ENCODE measurements at regions of chr6 and their contacts with region 1.

Region 1: DNA sequence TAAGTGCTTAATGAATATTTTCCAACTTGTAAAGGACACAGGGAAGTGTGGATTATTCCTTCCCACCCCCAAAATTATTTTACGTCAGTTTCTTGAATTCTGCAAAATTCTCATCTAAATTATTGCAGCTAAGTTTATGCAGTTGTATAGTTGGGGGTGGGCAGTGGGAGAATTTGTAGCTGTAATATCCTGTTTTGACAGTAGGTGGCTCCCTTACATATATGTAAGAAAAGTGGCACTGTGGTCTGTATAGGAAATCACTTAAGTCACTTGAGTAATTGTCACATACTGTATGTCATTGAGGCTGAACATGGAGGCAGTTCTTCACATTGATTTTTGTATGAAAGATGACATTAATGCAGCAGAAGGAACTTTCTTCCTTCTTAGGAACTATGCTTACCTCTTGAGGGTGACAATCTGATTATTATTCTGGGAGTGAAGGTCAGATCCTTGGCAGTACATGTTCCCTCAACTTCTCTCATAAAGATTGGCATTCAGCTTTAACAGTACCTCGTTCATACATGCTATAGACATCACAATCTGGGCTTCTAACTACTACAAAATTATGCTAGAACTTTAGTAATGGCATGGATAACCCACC is 14.7 kb upstream of the CFAP206 start:
- DNase-seq: peak; percentile 18 to 42
- H3K4me3 ChIP-seq: no peak overlapping the region
- H3K27ac ChIP-seq: no peak overlapping the region
- H3K4me1 ChIP-seq: no peaks in the 10 kb centered on the region
- H3K27me3 ChIP-seq: no peaks in the 10 kb centered on the region
- CTCF ChIP-seq: peak; percentile 76

Region 2: DNA sequence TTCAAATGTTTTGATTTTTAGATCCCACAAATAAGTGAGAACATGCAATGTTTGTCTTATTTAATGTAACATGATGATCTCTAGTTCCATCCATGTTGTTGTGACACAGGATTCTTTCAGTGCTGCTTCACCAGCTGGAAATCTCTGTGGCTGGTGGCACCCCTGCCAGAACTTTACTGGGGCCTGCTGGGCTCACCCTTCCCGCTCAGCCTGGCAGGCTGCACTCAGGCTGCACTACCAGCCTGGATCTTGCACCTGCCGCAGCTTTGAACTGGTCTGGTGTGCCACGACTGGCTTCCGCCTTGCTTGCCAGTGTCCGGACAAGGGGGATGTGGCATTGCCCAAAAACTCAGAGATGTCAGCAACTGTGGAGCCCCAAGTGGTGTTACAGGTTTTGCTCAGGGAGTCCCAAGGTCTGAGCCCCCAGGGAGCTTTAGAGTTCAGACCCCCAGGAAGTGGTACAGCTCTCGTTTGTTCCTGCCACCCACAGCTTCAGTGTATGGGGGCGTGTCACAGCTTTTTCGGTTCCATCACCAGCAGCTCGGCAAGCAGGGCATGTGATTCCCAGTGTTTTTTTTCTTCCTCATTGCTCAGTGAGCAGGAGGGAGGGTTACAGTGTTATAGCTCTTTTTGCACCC is 1678.1 kb before region 1 on chr6:
- CTCF ChIA-PET with region 1: no interaction called
- POLR2A ChIA-PET with region 1: no interaction called
- intact Hi-C with region 1: no loop called
- DNase-seq: no peak
- H3K4me3 ChIP-seq: no peak overlapping the region
- H3K27ac ChIP-seq: no peak overlapping the region
- H3K4me1 ChIP-seq: no peaks in the 10 kb centered on the region
- H3K27me3 ChIP-seq: no peaks in the 10 kb centered on the region
- CTCF ChIP-seq: no peak

Region 3: GRCh38 chr6:87066449-87067333 is 326.4 kb before region 1 on chr6:
- CTCF ChIA-PET with region 1: no interaction called
- POLR2A ChIA-PET with region 1: no interaction called
- intact Hi-C with region 1: loop called (anchors 1 kb)
- DNase-seq: peak in 1 of 2 experiments; percentile 26
- H3K4me3 ChIP-seq: no peak overlapping the region
- H3K27ac ChIP-seq: no peak overlapping the region
- H3K4me1 ChIP-seq: no peaks in the 10 kb centered on the region
- H3K27me3 ChIP-seq: no peaks in the 10 kb centered on the region
- CTCF ChIP-seq: peak; percentile 77

Region 4: GRCh38 chr6:87139236-87139635 is 253.9 kb before region 1 on chr6:
- CTCF ChIA-PET with region 1: no interaction called
- POLR2A ChIA-PET with region 1: no interaction called
- intact Hi-C with region 1: loop called (anchors 1 kb)
- DNase-seq: peak in 1 of 2 experiments; percentile 23
- H3K4me3 ChIP-seq: no peak overlapping the region
- H3K27ac ChIP-seq: no peak overlapping the region
- H3K4me1 ChIP-seq: no peaks in the 10 kb centered on the region
- H3K27me3 ChIP-seq: no peaks in the 10 kb centered on the region
- CTCF ChIP-seq: peak; percentile 78

Region 5: DNA sequence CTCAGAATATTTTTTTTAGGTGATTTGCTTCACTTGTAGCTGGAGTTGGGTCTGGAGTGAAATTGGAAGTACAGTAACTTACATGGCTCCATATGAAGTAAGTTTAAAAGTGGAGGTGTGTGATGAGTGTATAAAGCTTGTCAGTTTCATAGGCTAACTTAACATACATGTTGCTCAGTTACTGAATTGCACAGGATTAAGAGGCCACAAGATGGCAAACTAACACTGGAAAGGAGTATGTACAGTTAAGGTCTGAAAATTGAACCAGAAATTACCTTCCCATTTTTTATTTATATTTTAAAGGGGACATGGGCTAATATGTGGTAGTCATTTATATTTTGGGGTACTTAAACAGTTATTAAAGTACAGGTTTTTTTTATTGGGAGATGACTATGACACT is 116.0 kb before region 1 on chr6:
- CTCF ChIA-PET with region 1: no interaction called
- POLR2A ChIA-PET with region 1: no interaction called
- intact Hi-C with region 1: loop called (anchors 2 kb)
- DNase-seq: no peak
- H3K4me3 ChIP-seq: no peak overlapping the region
- H3K27ac ChIP-seq: no peak overlapping the region
- H3K4me1 ChIP-seq: no peaks in the 10 kb centered on the region
- H3K27me3 ChIP-seq: no peaks in the 10 kb centered on the region
- CTCF ChIP-seq: peak; percentile 41

Region 6: GRCh38 chr6:87589693-87590549 is 196.8 kb after region 1 on chr6 and contains the starts of genes ORC3 and RARS2:
- CTCF ChIA-PET with region 1: no interaction called
- POLR2A ChIA-PET with region 1: no interaction called
- intact Hi-C with region 1: loop called (anchors 10 kb)
- DNase-seq: peak; percentile 85 to 94
- H3K4me3 ChIP-seq: peak within 1 kb of the TSS; percentile 75
- H3K27ac ChIP-seq: peak within 1 kb of the TSS; percentile 27
- H3K4me1 ChIP-seq: peaks cover 11% of the 10 kb centered on the region
- H3K27me3 ChIP-seq: no peaks in the 10 kb centered on the region
- CTCF ChIP-seq: no peak
- total RNA-seq, gene ORC3: 19.8 and 24.3 TPM in 2 replicates
- total RNA-seq, gene RARS2: 22.6 and 34.6 TPM in 2 replicates

Region 7: DNA sequence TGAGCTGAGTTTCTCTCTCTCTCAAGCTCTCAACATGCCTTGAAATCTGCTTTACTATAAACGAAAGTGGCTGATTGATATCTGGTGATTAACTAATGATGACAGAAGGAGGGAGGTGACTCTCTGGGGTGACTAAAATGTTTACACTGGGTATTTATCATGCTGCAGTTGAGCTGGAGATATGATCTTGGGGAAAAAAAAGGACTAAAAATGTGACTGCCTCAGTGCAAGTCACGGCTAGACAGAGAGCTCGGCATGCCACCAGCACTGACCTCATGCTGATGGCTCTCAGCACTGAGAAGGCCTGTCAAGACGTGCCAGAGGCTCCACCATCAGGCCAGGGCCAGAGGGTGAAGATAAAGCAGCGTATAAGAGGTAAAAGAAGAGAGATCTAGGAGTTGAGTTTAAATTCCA is 551.4 kb after region 1 on chr6:
- CTCF ChIA-PET with region 1: no interaction called
- POLR2A ChIA-PET with region 1: no interaction called
- intact Hi-C with region 1: loop called (anchors 10 kb)
- DNase-seq: peak; percentile 55 to 84
- H3K4me3 ChIP-seq: no peak overlapping the region
- H3K27ac ChIP-seq: peak overlapping the region; percentile 25
- H3K4me1 ChIP-seq: peaks cover 4% of the 10 kb centered on the region; the same call in 1 of the 2 replicates
- H3K27me3 ChIP-seq: no peaks in the 10 kb centered on the region
- CTCF ChIP-seq: no peak; the same call in 1 of the 2 replicates

Measured in PC-9 (cell line).